Naive thymus-derived CD4-positive, alpha-beta T cell (primary cell): ENCODE measurements at regions of chr7 and their contacts with region 1.

Region 1: GRCh38 chr7:135672560-135673359 is 10.4 kb downstream of the STMP1 start:
- DNase-seq: peak in 3 of 9 donors; percentile 9 to 15 (median 15)
- ATAC-seq: peak; percentile 75
- H3K4me3 ChIP-seq: no peak overlapping the region
- H3K4me3 Mint-ChIP-seq: no peak overlapping the region
- H3K27ac ChIP-seq: no peak overlapping the region
- H3K27ac Mint-ChIP-seq: peak overlapping the region in 2 of 9 donors; percentile 15 to 33
- H3K4me1 ChIP-seq: no peaks in the 10 kb centered on the region
- H3K4me1 Mint-ChIP-seq: peaks cover 13 to 41% (median 38%) of the 10 kb centered on the region in 7 donors
- H3K27me3 ChIP-seq: no peaks in the 10 kb centered on the region
- H3K27me3 Mint-ChIP-seq: no peaks in the 10 kb centered on the region

Region 2: GRCh38 chr7:135519233-135519688 is 153.5 kb before region 1 on chr7:
- CTCF ChIA-PET with region 1: no interaction called
- POLR2A ChIA-PET with region 1: no interaction called
- intact Hi-C with region 1: no loop called
- DNase-seq: no peak
- ATAC-seq: no peak
- H3K4me3 ChIP-seq: no peak overlapping the region
- H3K4me3 Mint-ChIP-seq: no peak overlapping the region
- H3K27ac ChIP-seq: no peak overlapping the region
- H3K27ac Mint-ChIP-seq: no peak overlapping the region
- H3K4me1 ChIP-seq: no peaks in the 10 kb centered on the region
- H3K4me1 Mint-ChIP-seq: no peaks in the 10 kb centered on the region
- H3K27me3 ChIP-seq: no peaks in the 10 kb centered on the region
- H3K27me3 Mint-ChIP-seq: peaks cover 0 to 2% (median 0%) of the 10 kb centered on the region in 5 donors

Region 3: GRCh38 chr7:135634191-135634878 is 38.4 kb before region 1 on chr7:
- CTCF ChIA-PET with region 1: no interaction called
- POLR2A ChIA-PET with region 1: no interaction called
- intact Hi-C with region 1: loop called in 1 of 2 experiments (anchors 1 kb)
- DNase-seq: no peak
- ATAC-seq: no peak
- H3K4me3 ChIP-seq: no peak overlapping the region
- H3K4me3 Mint-ChIP-seq: no peak overlapping the region
- H3K27ac ChIP-seq: no peak overlapping the region
- H3K27ac Mint-ChIP-seq: peak overlapping the region in 4 of 9 donors; percentile 3 to 46 (median 31)
- H3K4me1 ChIP-seq: no peaks in the 10 kb centered on the region
- H3K4me1 Mint-ChIP-seq: no peaks in the 10 kb centered on the region
- H3K27me3 ChIP-seq: no peaks in the 10 kb centered on the region
- H3K27me3 Mint-ChIP-seq: no peaks in the 10 kb centered on the region

Region 4: GRCh38 chr7:136009488-136010079 is 336.8 kb after region 1 on chr7:
- CTCF ChIA-PET with region 1: interaction called, 5 read pairs
- POLR2A ChIA-PET with region 1: no interaction called
- intact Hi-C with region 1: loop called (anchors 1 kb)
- DNase-seq: peak in 7 of 9 donors; percentile 13 to 51 (median 40)
- ATAC-seq: peak; percentile 45
- H3K4me3 ChIP-seq: no peak overlapping the region
- H3K4me3 Mint-ChIP-seq: no peak overlapping the region
- H3K27ac ChIP-seq: no peak overlapping the region
- H3K27ac Mint-ChIP-seq: no peak overlapping the region
- H3K4me1 ChIP-seq: no peaks in the 10 kb centered on the region
- H3K4me1 Mint-ChIP-seq: peaks cover 0 to 10% (median 6%) of the 10 kb centered on the region in 7 donors
- H3K27me3 ChIP-seq: no peaks in the 10 kb centered on the region
- H3K27me3 Mint-ChIP-seq: peaks cover 3 to 22% (median 9%) of the 10 kb centered on the region in 5 donors